A673 (cell line): ENCODE measurements at regions of chr15 and their contacts with region 1.

Region 1: DNA sequence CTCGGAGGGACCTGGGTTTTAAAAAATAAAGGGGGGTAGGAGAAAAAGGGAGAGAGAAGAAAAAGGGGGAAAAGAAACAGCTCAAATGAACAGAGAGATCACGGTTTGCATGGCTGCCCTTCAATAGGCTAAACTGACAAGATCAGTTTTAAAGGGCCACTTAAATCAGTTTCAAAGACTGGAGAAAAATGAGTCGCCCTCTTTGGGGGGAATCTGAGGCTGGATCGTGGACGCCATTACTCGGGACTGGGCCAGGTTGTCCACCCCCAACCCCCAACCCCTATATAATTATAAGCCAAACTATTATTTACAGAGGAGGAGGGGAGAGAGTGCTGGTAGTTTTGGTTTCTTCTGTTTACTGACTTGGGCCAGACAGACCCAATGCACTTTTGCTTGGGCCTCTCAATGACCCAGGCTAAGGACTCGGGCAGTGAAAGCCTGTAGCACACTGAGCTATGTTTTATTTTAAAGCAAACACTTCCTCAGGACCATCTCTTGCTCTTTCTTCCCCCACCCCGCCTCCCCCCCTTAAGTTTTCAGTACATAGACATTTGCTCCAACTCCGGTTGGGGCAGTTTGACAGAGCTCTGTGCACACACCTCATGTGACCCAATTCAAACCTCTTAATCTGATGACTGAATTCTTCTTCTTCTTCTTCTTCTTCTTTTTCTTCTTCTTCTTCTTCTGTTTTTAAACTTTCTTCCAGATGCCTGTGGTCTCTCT is 6.3 kb downstream of the NR2F2 start:
- DNase-seq: no peak
- H3K4me3 ChIP-seq: peak overlapping the region; percentile 77
- H3K27ac ChIP-seq: peak overlapping the region; percentile 97
- H3K4me1 ChIP-seq: peaks cover 10% of the 10 kb centered on the region
- H3K27me3 ChIP-seq: no peaks in the 10 kb centered on the region
- CTCF ChIP-seq: no peak

Region 2: GRCh38 chr15:96307856-96308394 is 28.9 kb before region 1 on chr15:
- CTCF ChIA-PET with region 1: no interaction called
- POLR2A ChIA-PET with region 1: interaction called, 12 read pairs
- intact Hi-C with region 1: no loop called
- DNase-seq: no peak
- H3K4me3 ChIP-seq: no peak overlapping the region
- H3K27ac ChIP-seq: no peak overlapping the region
- H3K4me1 ChIP-seq: peaks cover 28% of the 10 kb centered on the region
- H3K27me3 ChIP-seq: no peaks in the 10 kb centered on the region
- CTCF ChIP-seq: no peak

Region 3: GRCh38 chr15:96992817-96993216 is 656.0 kb after region 1 on chr15:
- CTCF ChIA-PET with region 1: no interaction called
- POLR2A ChIA-PET with region 1: no interaction called
- intact Hi-C with region 1: no loop called
- DNase-seq: peak; percentile 22
- H3K4me3 ChIP-seq: no peak overlapping the region
- H3K27ac ChIP-seq: no peak overlapping the region
- H3K4me1 ChIP-seq: peaks cover under 1% of the 10 kb centered on the region
- H3K27me3 ChIP-seq: no peaks in the 10 kb centered on the region
- CTCF ChIP-seq: no peak

Region 4: DNA sequence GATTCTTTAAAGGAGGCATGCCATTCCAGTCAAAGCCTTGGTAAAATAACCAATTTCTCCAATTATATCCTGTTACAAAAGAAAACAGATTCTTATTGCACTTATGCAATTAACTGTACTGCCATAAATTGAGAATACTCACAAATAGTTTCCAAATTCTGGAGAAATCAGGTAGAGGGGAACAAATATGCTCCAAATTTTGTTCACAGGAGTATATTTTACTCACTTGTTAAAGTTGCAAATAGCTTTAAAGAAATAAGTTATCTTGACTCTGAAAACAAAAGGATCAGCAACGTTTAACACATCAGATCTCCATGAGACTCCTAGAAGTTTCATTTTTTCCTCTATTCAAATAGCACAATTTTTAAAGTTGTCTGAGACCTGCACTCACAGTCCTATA is 911.6 kb after region 1 on chr15:
- CTCF ChIA-PET with region 1: interaction called, 15 read pairs
- POLR2A ChIA-PET with region 1: interaction called, 5 read pairs
- intact Hi-C with region 1: no loop called
- DNase-seq: no peak
- H3K4me3 ChIP-seq: no peak overlapping the region
- H3K27ac ChIP-seq: no peak overlapping the region
- H3K4me1 ChIP-seq: peaks cover 5% of the 10 kb centered on the region
- H3K27me3 ChIP-seq: no peaks in the 10 kb centered on the region
- CTCF ChIP-seq: no peak